ENCODE measurements at regions of chr9 and their contacts with region 1.

Region 1: DNA sequence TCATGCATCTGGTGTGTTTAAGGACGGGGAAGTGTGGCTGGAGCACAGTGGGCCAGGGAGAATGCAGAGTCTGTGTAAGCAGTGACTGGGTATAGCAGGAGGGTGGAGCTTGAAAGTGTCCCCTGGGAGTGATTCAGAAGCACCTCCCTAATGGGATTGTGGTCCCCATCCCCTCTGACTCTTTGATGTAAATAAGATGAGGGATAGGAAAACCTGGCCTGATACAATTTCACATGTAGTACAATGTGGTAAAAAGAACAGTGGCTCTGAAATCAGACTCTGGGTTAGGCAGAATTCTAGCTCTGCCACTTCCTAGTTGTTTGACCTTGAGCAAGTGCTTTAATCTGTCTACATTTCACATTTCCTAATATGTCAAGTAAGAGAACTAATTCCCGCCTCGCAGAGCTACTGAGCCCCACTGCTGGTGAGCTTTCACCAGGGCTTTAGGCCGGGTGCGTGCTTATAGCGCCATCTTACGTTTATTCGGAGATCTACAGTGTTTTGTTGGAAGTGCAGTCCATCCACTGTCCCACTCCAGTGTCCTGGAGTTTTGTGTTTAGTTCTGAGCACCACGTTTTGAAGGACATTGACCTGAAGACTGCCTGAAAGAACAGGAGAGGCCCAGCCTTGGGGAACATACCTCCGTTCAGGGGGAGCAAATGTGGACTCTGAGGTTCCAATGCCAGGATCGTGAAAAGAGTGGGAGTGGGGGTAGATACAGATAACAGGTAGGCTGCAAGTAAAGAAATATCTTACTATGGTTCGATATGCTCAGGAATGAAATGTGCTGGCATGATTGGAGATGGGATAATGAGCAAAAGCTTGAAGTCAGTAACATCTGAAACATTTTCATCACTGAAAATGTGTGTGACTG is 51.2 kb upstream of the TESK1 start:
- DNase-seq: peak; percentile 41 to 88
- H3K4me3 ChIP-seq: peak overlapping the region in 1 of 2 donors; percentile 7
- H3K27ac ChIP-seq: peak overlapping the region; percentile 68 to 76
- H3K4me1 ChIP-seq: peaks cover 0 to 36% of the 10 kb centered on the region in 2 donors
- H3K27me3 ChIP-seq: no peaks in the 10 kb centered on the region
- CTCF ChIP-seq: peak; percentile 85 to 91 (median 87)

Region 2: DNA sequence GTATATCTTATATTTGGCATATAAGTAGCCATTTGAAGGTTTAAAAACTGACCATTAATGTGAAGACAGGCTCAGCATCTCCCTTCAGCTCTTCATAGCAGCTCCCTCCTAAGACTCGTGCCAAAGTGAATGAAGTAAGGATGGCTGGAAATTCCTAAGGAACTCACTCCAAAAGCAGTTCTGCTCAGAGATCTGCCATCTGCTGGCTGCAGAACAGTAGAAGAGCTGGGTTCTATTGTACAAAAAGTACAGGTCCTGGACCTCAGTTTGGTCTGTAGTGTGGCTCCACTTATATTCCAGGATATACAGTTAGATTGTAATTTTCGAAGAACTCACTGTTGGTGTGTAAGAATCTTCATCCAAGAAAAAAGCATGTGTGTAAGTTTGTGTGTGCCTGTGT is 168.9 kb before region 1 on chr9:
- intact Hi-C with region 1: no loop called
- DNase-seq: no peak
- H3K4me3 ChIP-seq: no peak overlapping the region
- H3K27ac ChIP-seq: no peak overlapping the region
- H3K4me1 ChIP-seq: no peaks in the 10 kb centered on the region
- H3K27me3 ChIP-seq: no peaks in the 10 kb centered on the region
- CTCF ChIP-seq: peak; percentile 25 to 50 (median 29)

Region 3: GRCh38 chr9:35481347-35481975 is 72.4 kb before region 1 on chr9:
- intact Hi-C with region 1: loop called (anchors 1 kb)
- DNase-seq: peak in 1 of 2 donors; percentile 76
- H3K4me3 ChIP-seq: no peak overlapping the region
- H3K27ac ChIP-seq: peak overlapping the region in 1 of 2 donors; percentile 49
- H3K4me1 ChIP-seq: no peaks in the 10 kb centered on the region
- H3K27me3 ChIP-seq: no peaks in the 10 kb centered on the region
- CTCF ChIP-seq: peak; percentile 53 to 68 (median 65)

Region 4: GRCh38 chr9:35510745-35511428 is 43.0 kb before region 1 on chr9:
- intact Hi-C with region 1: loop called (anchors 1 kb)
- DNase-seq: peak; percentile 53 to 94
- H3K4me3 ChIP-seq: peak overlapping the region in 1 of 2 donors; percentile 22
- H3K27ac ChIP-seq: peak overlapping the region; percentile 94 to 95
- H3K4me1 ChIP-seq: peaks cover 13 to 65% of the 10 kb centered on the region in 2 donors
- H3K27me3 ChIP-seq: no peaks in the 10 kb centered on the region
- CTCF ChIP-seq: peak; percentile 39 to 52 (median 42)

Region 5: GRCh38 chr9:35521706-35522105 is 32.2 kb before region 1 on chr9:
- intact Hi-C with region 1: no loop called
- DNase-seq: peak in 1 of 2 donors; percentile 73
- H3K4me3 ChIP-seq: no peak overlapping the region
- H3K27ac ChIP-seq: peak overlapping the region; percentile 94 to 95
- H3K4me1 ChIP-seq: peaks cover 29 to 76% of the 10 kb centered on the region in 2 donors
- H3K27me3 ChIP-seq: no peaks in the 10 kb centered on the region
- CTCF ChIP-seq: no peak

Region 6: GRCh38 chr9:35538361-35539234 is 15.3 kb before region 1 on chr9:
- intact Hi-C with region 1: loop called (anchors 1 kb)
- DNase-seq: peak; percentile 50 to 89
- H3K4me3 ChIP-seq: peak overlapping the region; percentile 40 to 49
- H3K27ac ChIP-seq: peak overlapping the region; percentile 88 to 93
- H3K4me1 ChIP-seq: peaks cover 18 to 57% of the 10 kb centered on the region in 2 donors
- H3K27me3 ChIP-seq: no peaks in the 10 kb centered on the region
- CTCF ChIP-seq: no peak

Region 7: DNA sequence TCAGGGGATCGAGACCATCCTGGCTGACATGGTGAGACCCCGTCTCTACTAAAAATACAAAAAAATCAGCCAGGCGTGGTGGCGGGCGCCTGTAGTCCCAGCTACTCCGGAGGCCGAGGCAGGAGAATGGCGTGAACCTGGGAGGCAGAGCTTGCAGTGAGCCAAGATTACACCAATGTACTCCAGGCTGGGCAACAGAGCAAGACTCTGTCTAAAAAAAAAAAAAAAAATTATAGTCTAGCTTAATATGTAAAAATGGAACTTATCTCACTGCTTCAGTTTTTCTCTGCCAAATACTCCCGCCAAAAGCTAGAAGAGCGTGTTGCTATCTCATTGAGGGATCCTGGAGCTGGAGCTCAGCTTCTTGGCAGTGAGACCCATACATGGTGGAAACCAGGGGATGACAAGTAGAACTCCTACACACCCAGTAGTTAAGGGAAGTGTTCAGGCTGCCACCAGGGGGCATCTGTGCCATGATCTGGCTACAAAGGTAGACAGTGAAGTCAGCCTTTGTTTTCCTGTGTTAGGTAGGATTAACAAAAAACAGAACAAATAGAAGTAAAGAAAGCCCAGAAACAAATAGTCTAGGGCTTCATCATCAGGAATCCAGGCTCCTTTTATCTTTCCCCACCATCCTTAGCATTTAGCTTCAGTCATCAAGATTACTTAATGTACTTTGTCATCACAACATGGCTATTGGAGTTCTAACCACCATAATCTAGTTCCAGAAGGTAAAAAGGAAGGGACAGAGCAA is 549.0 kb after region 1 on chr9:
- intact Hi-C with region 1: no loop called
- DNase-seq: peak; percentile 50 to 88
- H3K4me3 ChIP-seq: no peak overlapping the region
- H3K27ac ChIP-seq: peak overlapping the region; percentile 31 to 57
- H3K4me1 ChIP-seq: no peaks in the 10 kb centered on the region
- H3K27me3 ChIP-seq: no peaks in the 10 kb centered on the region
- CTCF ChIP-seq: peak; percentile 75 to 82 (median 79)